Motor neuron (in vitro differentiated cells): ENCODE measurements at regions of chr4 and their contacts with region 1.

Region 1: GRCh38 chr4:183492791-183493221 is 12.1 kb upstream of the ING2 start:
- ATAC-seq: peak in 3 of 8 experiments; percentile 18 to 89 (median 88)
- H3K4me3 ChIP-seq: no peak overlapping the region
- H3K27ac ChIP-seq: no peak overlapping the region
- H3K4me1 ChIP-seq: no peaks in the 10 kb centered on the region

Region 2: GRCh38 chr4:183241322-183241640 is 251.5 kb before region 1 on chr4:
- in situ Hi-C with region 1: no loop called
- ATAC-seq: peak in 3 of 8 experiments; percentile 12 to 73 (median 68)
- H3K4me3 ChIP-seq: no peak overlapping the region
- H3K27ac ChIP-seq: no peak overlapping the region
- H3K4me1 ChIP-seq: peaks cover 0 to 10% of the 10 kb centered on the region in 2 donors

Region 3: DNA sequence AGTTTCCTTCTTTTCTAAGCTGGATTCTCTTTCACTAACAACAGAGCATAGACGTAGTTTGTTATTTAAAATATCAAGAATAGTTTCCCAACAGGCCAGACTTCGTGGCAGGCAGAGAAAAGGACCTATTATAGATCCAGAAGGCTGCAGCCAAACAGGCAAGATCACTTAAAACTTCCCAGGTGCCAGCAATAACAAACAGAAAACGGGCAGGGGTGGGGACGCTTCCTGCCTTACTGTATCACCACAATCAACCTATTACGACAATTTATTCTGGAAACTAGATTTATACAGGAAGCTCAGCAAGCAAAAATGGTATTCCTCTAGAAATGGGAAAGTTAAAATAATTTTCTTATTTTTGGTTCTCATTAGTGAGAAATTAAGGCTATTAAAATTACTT is 144.1 kb after region 1 on chr4:
- in situ Hi-C with region 1: loop called in 2 of 9 experiments (anchors 25 kb)
- ATAC-seq: no peak
- H3K4me3 ChIP-seq: no peak overlapping the region
- H3K27ac ChIP-seq: no peak overlapping the region
- H3K4me1 ChIP-seq: peaks cover 0 to 2% of the 10 kb centered on the region in 2 donors

Region 4: DNA sequence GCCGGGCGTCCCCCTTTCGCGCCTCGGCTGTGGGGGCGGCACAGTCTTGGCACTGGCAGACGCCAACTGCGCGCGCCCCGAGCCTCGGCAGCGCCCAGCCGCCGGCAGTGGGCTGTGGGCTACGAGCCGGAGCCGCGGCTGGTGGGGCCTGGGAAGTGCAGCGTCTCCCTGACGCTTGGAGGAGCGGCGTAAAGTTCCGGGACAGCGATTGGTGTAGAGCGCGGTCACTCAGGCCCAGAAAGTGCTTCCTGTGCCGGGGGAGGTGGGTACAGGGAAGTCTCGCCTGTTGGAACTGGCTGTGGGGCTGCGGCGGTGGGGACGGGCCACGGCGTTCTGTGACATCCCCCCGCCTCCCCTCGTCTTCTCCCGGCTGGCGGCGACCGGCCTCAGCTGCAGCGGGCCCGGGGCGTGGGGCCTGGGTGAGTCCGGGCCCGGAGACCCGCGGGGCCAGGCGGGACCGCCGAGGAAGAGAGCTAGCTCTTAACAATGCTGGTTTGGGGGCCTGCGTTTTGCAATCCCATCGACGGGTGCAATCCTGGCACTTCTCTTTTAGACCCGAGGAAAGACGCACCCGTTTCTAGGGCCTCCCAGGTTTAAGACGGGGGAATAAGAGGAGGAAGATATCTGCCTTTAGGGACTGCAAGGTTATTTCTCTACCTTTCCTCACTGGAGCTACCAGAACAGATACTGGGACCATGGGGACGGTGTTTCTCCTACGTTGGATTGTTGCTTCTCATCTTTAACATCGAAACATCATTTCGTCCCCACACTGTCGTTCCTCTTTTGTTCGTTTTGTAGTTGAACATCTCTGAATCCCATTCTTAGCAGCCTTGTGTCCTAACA is 166.4 kb after region 1 on chr4 and contains the starts of genes RWDD4 and TRAPPC11:
- in situ Hi-C with region 1: loop called in 4 of 9 experiments (anchors 25 kb)
- ATAC-seq: peak; percentile 97 to 99 (median 99)
- H3K4me3 ChIP-seq: peak within 1 kb of the TSS; percentile 64 to 74 (median 73)
- H3K27ac ChIP-seq: peak within 1 kb of the TSS; percentile 86 to 93
- H3K4me1 ChIP-seq: peaks cover 10% of the 10 kb centered on the region in 2 donors
- total RNA-seq, gene RWDD4: 21.9 to 53.4 (median 26.8) TPM
- total RNA-seq, gene TRAPPC11: 26.5 to 53.0 (median 42.9) TPM

Region 5: DNA sequence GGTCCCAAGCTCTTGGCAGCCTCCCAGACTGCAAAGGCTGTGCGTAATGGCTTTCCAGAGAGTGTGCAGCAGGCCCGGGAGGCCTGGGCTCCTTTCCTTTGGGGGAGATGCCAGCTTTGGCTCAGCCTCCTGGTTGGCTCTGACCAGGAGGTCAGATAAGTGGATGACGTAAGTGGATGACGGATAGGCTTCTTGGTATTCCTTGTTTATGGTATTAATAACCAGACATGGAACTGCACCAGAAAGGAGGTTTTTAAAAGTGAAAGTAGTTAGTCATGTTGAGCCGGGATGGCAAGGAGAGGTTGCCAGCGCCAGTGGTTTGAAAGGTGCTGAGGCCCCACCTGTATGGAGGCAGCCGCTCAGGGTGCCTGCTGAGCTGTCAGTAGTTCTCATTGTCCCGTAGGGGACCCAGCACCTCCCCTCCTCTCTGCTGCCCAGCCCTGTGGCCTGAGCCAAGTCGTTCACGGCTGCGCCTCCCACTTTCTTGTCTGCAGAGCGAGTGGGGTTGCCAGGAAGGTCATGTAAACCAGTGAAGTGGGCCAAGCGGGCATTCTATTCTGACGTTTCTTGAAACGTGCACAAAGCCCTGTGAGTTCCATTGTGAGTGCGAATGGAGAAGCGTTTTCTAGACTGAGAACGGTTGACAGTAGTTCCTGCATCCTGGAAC is 383.6 kb after region 1 on chr4:
- in situ Hi-C with region 1: no loop called
- ATAC-seq: peak in 6 of 8 experiments; percentile 46 to 74 (median 67)
- H3K4me3 ChIP-seq: no peak overlapping the region
- H3K27ac ChIP-seq: no peak overlapping the region
- H3K4me1 ChIP-seq: peaks cover 2 to 5% of the 10 kb centered on the region in 2 donors

Region 6: GRCh38 chr4:184168406-184169019 is 675.7 kb after region 1 on chr4:
- in situ Hi-C with region 1: loop called in 1 of 9 experiments (anchors 25 kb)
- ATAC-seq: peak; percentile 96 to 99 (median 98)
- H3K4me3 ChIP-seq: no peak overlapping the region
- H3K27ac ChIP-seq: no peak overlapping the region
- H3K4me1 ChIP-seq: peaks cover 6% of the 10 kb centered on the region in 2 donors